B cell (primary cell): ENCODE measurements at regions of chr10 and their contacts with region 1.

Region 1: GRCh38 chr10:89414146-89414878 is at the start of gene IFIT5:
- DNase-seq: peak; percentile 88
- ATAC-seq: peak; percentile 71
- H3K4me3 ChIP-seq: peak within 1 kb of the TSS; percentile 71 to 98 (median 90)
- H3K4me3 Mint-ChIP-seq: peak within 1 kb of the TSS; percentile 92
- H3K27ac ChIP-seq: peak within 1 kb of the TSS; percentile 91 to 93
- H3K27ac Mint-ChIP-seq: peak within 1 kb of the TSS; percentile 95
- H3K4me1 ChIP-seq: peaks cover 29 to 38% of the 10 kb centered on the region in 2 donors
- H3K4me1 Mint-ChIP-seq: peaks cover 44% of the 10 kb centered on the region
- H3K27me3 ChIP-seq: no peaks in the 10 kb centered on the region
- H3K27me3 Mint-ChIP-seq: no peaks in the 10 kb centered on the region
- CTCF ChIP-seq: no peak
- total RNA-seq, gene IFIT5: 23.2 and 25.0 TPM in 2 replicates

Region 2: GRCh38 chr10:87817609-87818504 is 1596.5 kb before region 1 on chr10 and contains the start of gene ATAD1:
- CTCF ChIA-PET with region 1: no interaction called
- POLR2A ChIA-PET with region 1: no interaction called
- intact Hi-C with region 1: loop called (anchors 5 kb)
- DNase-seq: peak; percentile 93
- ATAC-seq: peak; percentile 81
- H3K4me3 ChIP-seq: peak within 1 kb of the TSS; percentile 84 to 93 (median 87)
- H3K4me3 Mint-ChIP-seq: peak within 1 kb of the TSS; percentile 96
- H3K27ac ChIP-seq: peak within 1 kb of the TSS; percentile 91 to 95
- H3K27ac Mint-ChIP-seq: peak within 1 kb of the TSS; percentile 97
- H3K4me1 ChIP-seq: peaks cover 15 to 25% of the 10 kb centered on the region in 2 donors
- H3K4me1 Mint-ChIP-seq: peaks cover 37% of the 10 kb centered on the region
- H3K27me3 ChIP-seq: no peaks in the 10 kb centered on the region
- H3K27me3 Mint-ChIP-seq: no peaks in the 10 kb centered on the region
- CTCF ChIP-seq: peak; percentile 16
- total RNA-seq, gene ATAD1: 41.5 and 44.9 TPM in 2 replicates

Region 3: GRCh38 chr10:89086801-89087521 is 327.4 kb before region 1 on chr10:
- CTCF ChIA-PET with region 1: no interaction called
- POLR2A ChIA-PET with region 1: no interaction called
- intact Hi-C with region 1: loop called (anchors 10 kb)
- DNase-seq: no peak
- ATAC-seq: peak; percentile 41
- H3K4me3 ChIP-seq: no peak overlapping the region
- H3K4me3 Mint-ChIP-seq: no peak overlapping the region
- H3K27ac ChIP-seq: no peak overlapping the region
- H3K27ac Mint-ChIP-seq: no peak overlapping the region
- H3K4me1 ChIP-seq: peaks cover 5 to 6% of the 10 kb centered on the region in 2 donors
- H3K4me1 Mint-ChIP-seq: peaks cover 2% of the 10 kb centered on the region
- H3K27me3 ChIP-seq: no peaks in the 10 kb centered on the region
- H3K27me3 Mint-ChIP-seq: no peaks in the 10 kb centered on the region
- CTCF ChIP-seq: no peak

Region 4: DNA sequence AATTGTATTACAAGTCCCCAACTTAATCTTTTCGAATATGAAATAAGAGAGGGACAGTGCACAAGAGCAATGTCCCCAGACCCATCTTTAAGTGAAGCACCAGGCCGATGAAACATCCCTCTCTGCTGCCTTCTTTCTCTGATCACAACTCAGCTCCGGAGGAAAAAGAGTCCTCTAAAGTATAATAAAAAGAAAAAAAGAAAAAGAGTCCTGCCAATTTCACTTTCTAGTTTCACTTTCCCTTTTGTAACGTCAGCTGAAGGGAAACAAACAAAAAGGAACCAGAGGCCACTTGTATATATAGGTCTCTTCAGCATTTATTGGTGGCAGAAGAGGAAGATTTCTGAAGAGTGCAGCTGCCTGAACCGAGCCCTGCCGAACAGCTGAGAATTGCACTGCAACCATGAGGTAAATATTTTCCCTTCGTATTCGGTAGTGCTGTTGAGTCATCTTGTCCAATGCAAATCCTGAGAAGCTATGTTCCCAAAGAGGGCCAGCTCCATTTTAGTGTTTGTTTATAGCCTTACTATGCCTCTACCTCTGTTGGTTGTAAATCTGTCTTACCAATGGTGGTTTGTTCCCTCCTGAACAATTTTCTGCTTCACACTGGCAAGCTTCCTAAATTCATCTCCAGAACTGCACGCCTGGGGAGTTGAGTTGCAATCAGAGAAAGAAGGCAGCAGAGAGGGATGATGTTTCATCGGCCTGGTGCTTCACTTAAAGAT is 112.4 kb before region 1 on chr10 and contains the start of gene IFIT2:
- CTCF ChIA-PET with region 1: interaction called, 5 read pairs
- POLR2A ChIA-PET with region 1: interaction called, 4 read pairs
- intact Hi-C with region 1: loop called (anchors 1 kb)
- DNase-seq: peak; percentile 87
- ATAC-seq: peak; percentile 95
- H3K4me3 ChIP-seq: peak within 1 kb of the TSS; percentile 57 to 92 (median 76)
- H3K4me3 Mint-ChIP-seq: peak within 1 kb of the TSS; percentile 94
- H3K27ac ChIP-seq: peak within 1 kb of the TSS; percentile 93 to 94
- H3K27ac Mint-ChIP-seq: peak within 1 kb of the TSS; percentile 97
- H3K4me1 ChIP-seq: peaks cover 37% of the 10 kb centered on the region in 2 donors
- H3K4me1 Mint-ChIP-seq: peaks cover 54% of the 10 kb centered on the region
- H3K27me3 ChIP-seq: no peaks in the 10 kb centered on the region
- H3K27me3 Mint-ChIP-seq: no peaks in the 10 kb centered on the region
- CTCF ChIP-seq: no peak
- total RNA-seq, gene IFIT2: 12.4 and 13.4 TPM in 2 replicates

Region 5: DNA sequence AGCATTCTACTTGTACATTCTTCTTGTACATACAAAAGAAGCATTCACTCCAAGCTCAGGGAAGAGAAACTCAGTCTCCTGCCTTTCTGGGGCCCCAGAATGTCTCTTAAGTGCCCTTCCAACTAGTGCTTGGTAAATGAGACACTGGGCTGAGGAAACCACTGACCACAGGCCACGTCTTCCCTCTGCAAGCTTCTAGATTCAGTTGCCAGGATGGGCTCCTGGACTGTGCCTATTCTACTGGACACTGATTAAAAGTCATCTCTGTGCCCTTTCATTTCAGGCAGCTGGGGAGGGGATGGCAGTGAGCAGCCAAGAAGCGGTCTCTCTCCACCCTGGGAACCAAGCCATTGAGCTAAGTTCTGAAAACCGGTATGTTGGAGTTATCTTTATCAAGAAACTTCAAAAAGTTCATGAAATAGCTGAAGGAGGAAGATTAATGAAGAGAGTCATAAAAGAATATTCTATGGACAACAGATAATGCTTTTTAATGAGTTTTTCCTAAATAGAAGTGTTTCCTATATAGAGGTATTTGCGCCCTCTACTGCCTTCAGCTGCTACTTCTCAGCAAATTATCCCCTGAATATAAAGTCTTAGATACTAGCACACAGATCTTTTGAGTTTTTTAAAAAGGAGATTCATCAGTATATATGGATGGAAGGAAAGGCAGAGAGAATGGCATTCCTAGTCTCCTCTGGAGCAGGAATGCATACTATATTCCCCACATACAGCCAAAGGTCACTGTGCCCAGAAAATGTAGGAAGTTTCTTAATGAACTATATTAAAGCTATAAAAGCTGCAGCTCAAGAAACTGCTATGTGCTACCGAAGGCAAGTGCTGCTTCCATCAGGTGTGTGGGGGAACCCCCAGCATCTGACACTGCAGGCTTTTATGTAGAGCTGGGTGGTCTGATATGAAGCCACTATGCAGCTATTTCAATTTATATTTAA is 44.9 kb before region 1 on chr10:
- CTCF ChIA-PET with region 1: interaction called, 10 read pairs
- POLR2A ChIA-PET with region 1: no interaction called
- intact Hi-C with region 1: no loop called
- DNase-seq: peak; percentile 38
- ATAC-seq: no peak
- H3K4me3 ChIP-seq: no peak overlapping the region
- H3K4me3 Mint-ChIP-seq: no peak overlapping the region
- H3K27ac ChIP-seq: no peak overlapping the region
- H3K27ac Mint-ChIP-seq: no peak overlapping the region
- H3K4me1 ChIP-seq: peaks cover 0 to 3% of the 10 kb centered on the region in 2 donors
- H3K4me1 Mint-ChIP-seq: peaks cover 8% of the 10 kb centered on the region
- H3K27me3 ChIP-seq: no peaks in the 10 kb centered on the region
- H3K27me3 Mint-ChIP-seq: peaks cover 3% of the 10 kb centered on the region
- CTCF ChIP-seq: peak; percentile 63

Region 6: DNA sequence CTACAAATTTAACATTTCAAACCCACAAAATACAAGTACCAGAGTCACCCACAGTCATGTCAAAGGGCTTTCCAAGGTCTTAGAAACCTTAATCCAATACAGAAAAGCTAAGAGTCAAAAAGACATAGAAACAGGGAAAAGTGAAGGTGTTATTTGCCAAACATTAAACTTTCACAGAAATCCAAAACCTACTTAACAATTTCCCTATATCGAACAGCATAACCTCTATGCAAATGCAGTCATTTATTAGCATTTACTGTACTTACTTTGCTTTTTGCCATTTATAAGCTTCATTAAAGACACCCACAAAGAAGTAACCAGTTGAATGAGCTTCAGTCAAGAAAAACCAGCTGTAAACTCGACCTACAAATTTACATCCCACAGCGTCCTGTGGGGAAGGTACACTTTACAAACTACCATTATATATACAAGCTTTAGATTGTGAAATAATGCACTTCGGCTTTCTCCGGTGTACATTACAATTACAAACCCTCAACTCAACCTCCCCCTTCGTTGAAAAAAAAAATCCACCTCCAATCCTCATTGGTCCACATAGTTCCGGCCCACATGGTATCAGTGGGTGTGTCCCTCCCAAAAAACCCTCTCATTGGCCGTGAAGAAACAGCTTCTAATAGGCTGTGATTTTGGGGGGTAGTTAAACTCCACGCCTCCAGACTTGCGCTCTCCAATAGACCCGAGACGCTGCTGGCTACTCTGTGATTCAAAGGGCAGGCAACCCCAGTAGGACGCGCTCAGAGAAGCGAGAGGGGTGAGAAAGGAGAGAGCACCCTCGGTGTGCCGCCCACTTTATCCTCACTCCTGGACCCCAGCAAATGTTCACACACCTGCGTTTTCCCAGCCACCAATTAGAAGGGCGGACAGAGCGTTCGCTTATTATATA is 229.4 kb after region 1 on chr10:
- CTCF ChIA-PET with region 1: no interaction called
- POLR2A ChIA-PET with region 1: no interaction called
- intact Hi-C with region 1: loop called (anchors 2 kb)
- DNase-seq: peak; percentile 85
- ATAC-seq: peak; percentile 91
- H3K4me3 ChIP-seq: peak overlapping the region; percentile 60 to 78 (median 75)
- H3K4me3 Mint-ChIP-seq: no peak overlapping the region
- H3K27ac ChIP-seq: peak overlapping the region in 1 of 2 donors; percentile 15
- H3K27ac Mint-ChIP-seq: no peak overlapping the region
- H3K4me1 ChIP-seq: peaks cover 12 to 25% of the 10 kb centered on the region in 2 donors
- H3K4me1 Mint-ChIP-seq: peaks cover 14% of the 10 kb centered on the region
- H3K27me3 ChIP-seq: peaks cover 0 to 2% (median 0%) of the 10 kb centered on the region in 4 experiments
- H3K27me3 Mint-ChIP-seq: no peaks in the 10 kb centered on the region
- CTCF ChIP-seq: no peak